Thyroid gland (tissue), 4 donors: ENCODE measurements at regions of chr3 and their contacts with region 1.

Region 1: DNA sequence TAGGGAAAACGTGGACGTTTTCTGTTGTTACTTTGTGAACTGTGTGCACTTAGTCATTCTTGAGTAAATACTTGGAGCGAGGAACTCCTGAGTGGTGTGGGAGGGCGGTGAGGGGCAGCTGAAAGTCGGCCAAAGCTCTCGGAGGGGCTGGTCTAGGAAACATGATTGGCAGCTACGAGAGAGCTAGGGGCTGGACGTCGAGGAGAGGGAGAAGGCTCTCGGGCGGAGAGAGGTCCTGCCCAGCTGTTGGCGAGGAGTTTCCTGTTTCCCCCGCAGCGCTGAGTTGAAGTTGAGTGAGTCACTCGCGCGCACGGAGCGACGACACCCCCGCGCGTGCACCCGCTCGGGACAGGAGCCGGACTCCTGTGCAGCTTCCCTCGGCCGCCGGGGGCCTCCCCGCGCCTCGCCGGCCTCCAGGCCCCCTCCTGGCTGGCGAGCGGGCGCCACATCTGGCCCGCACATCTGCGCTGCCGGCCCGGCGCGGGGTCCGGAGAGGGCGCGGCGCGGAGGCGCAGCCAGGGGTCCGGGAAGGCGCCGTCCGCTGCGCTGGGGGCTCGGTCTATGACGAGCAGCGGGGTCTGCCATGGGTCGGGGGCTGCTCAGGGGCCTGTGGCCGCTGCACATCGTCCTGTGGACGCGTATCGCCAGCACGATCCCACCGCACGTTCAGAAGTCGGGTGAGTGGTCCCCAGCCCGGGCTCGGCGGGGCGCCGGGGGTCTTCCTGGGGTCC is at the start of gene TGFBR2:
- DNase-seq: peak; percentile 96
- H3K4me3 ChIP-seq: peak within 1 kb of the TSS; percentile 67 to 98 (median 78)
- H3K27ac ChIP-seq: peak within 1 kb of the TSS; percentile 80 to 97 (median 95)
- H3K4me1 ChIP-seq: peaks cover 8 to 9% of the 10 kb centered on the region in 2 donors
- H3K27me3 ChIP-seq: no peaks in the 10 kb centered on the region
- CTCF ChIP-seq: peak in 3 of 6 experiments; percentile 15 to 32 (median 26)
- POLR2A ChIP-seq: peak in 1 of 2 donors; percentile 88
- total RNA-seq, gene TGFBR2: 120 to 418 (median 218) TPM

Region 2: DNA sequence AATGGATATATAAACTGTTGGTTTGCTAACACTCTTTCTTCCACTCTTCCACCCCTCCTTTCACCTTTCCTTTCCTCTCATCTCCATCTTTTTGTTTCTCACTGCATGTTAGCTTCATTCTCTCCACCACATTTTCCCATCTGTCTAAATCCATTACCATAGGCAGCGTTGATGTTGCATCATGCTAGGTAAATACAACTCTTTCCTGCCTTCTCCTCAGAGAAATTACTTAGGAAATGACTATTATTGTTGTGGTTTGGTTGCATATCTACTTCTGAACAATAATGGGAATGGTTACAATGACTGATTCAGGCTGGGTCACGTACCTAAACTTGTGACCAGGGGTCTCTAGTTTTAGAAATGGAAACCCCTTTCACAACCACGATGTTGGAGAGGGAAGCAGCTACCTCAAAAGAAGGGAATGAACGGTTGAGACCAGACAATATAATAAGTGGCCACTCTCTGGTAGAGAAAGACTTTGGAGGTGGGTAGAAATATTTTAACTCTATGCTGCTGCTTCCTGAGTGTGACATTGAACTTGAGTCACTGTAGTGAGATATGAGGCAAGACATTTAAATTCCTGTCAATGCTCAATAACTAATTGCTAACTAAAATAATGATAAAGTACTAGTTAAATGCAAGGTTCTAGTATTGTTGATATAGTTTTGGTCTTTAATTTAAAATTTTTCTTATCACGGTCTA is 314.1 kb before region 1 on chr3:
- intact Hi-C with region 1: no loop called
- DNase-seq: no peak
- H3K4me3 ChIP-seq: no peak overlapping the region
- H3K27ac ChIP-seq: no peak overlapping the region
- H3K4me1 ChIP-seq: peaks cover 0 to 8% of the 10 kb centered on the region in 2 donors
- H3K27me3 ChIP-seq: no peaks in the 10 kb centered on the region
- CTCF ChIP-seq: no peak
- POLR2A ChIP-seq: no peak

Region 3: DNA sequence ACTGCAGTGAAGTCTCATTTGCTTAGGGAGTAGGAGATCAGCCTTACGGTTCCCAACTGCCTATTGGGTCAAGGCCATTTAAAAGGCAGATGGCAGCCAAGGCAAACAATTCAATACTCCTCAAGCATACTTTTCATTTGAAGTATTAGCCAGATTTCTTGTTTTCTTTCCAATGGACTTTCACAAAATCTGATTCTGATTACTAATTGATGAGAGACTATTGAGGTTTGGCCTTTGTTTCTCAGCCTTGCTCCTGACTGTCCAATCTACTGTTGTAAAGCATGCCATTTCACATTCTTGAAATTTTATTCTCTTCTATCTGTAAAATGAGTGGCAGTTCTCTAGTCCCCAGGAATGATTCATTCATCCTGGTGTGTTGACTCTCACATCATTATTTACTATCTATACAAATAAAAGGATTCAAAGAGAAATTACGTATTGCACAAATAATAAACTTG is 166.3 kb before region 1 on chr3:
- intact Hi-C with region 1: loop called (anchors 10 kb)
- DNase-seq: no peak
- H3K4me3 ChIP-seq: no peak overlapping the region
- H3K27ac ChIP-seq: no peak overlapping the region
- H3K4me1 ChIP-seq: peaks cover 14 to 17% of the 10 kb centered on the region in 2 donors
- H3K27me3 ChIP-seq: no peaks in the 10 kb centered on the region
- CTCF ChIP-seq: no peak
- POLR2A ChIP-seq: no peak

Region 4: DNA sequence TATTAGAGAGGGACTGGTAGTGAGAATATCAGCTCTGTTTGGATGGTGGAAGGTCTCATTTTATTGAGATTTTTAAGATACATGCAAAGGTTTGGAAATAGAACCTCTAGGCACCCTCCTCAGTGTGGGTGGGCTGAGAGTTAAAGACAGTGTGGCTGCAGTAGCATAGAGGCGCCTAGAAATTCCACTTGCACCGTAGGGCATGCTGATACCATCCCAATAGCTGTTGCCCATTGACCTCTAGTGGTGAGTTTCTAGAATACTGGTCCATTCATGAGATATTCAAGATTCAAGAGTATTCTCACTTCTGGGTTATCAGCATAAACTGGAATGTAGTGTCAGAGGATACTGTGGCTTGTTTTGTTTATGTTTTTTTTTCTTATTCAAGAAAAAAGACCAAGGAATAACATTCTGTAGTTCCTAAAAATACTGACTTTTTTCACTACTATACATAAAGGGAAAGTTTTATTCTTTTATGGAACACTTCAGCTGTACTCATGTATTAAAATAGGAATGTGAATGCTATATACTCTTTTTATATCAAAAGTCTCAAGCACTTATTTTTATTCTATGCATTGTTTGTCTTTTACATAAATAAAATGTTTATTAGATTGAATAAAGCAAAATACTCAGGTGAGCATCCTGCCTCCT is 87.1 kb after region 1 on chr3:
- intact Hi-C with region 1: loop called (anchors 10 kb)
- DNase-seq: peak; percentile 41 to 43
- H3K4me3 ChIP-seq: no peak overlapping the region
- H3K27ac ChIP-seq: no peak overlapping the region
- H3K4me1 ChIP-seq: peaks cover 34 to 48% of the 10 kb centered on the region in 2 donors
- H3K27me3 ChIP-seq: no peaks in the 10 kb centered on the region
- CTCF ChIP-seq: peak; percentile 42 to 90 (median 81)
- POLR2A ChIP-seq: no peak